B cell (primary cell): ENCODE measurements at regions of chr3 and their contacts with region 1.

Region 1: DNA sequence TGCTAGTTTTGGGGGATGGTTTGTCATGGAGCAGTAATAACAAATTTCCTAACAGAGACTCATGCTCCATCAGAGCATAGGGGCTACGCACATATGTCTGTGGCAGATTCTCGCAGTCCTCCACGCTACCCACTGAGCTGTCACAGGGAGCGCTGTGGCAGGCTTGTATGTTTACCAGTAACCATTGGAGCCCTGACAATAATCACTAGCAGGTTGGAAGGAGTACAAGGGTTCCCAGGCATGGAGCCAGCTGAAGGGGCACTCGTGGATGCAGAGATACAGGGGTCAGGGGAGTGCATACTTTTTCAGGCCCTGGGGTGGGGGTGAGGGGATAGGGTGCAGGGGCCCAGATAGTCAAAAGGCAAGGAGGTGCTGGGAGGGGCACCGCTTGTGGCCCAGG is 7.9 kb upstream of the GP9 start:
- DNase-seq: no peak
- ATAC-seq: no peak
- H3K4me3 ChIP-seq: no peak overlapping the region
- H3K4me3 Mint-ChIP-seq: no peak overlapping the region
- H3K27ac ChIP-seq: no peak overlapping the region
- H3K27ac Mint-ChIP-seq: no peak overlapping the region
- H3K4me1 ChIP-seq: peaks cover 4 to 7% of the 10 kb centered on the region in 2 donors
- H3K4me1 Mint-ChIP-seq: peaks cover 7% of the 10 kb centered on the region
- H3K27me3 ChIP-seq: peaks cover 0 to 10% (median 2%) of the 10 kb centered on the region in 4 experiments
- H3K27me3 Mint-ChIP-seq: peaks cover 31% of the 10 kb centered on the region
- CTCF ChIP-seq: no peak

Region 2: DNA sequence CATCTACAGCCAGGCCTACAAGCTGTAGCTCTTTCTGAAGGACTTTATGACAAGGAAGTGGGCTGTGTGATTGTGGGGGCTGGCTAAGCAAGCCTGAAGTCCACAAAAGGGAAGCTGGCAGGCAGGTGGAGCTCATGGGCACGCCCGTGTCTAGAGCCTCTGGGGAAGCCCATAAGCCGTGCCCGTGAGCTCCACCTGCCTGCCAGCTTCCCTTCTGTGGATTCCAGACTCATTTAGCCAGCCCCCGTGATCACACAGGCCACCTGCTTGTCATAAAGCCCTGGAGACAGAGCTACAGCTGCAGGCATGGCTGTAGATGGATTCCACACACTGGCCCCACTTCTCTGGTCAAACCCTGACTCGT is 36.3 kb before region 1 on chr3:
- CTCF ChIA-PET with region 1: interaction called, 27 read pairs
- POLR2A ChIA-PET with region 1: no interaction called
- intact Hi-C with region 1: no loop called
- DNase-seq: peak; percentile 92
- ATAC-seq: peak; percentile 86
- H3K4me3 ChIP-seq: peak overlapping the region in 3 of 5 experiments; percentile 5 to 28 (median 18)
- H3K4me3 Mint-ChIP-seq: peak overlapping the region; percentile 79
- H3K27ac ChIP-seq: peak overlapping the region; percentile 85 to 96
- H3K27ac Mint-ChIP-seq: peak overlapping the region; percentile 97
- H3K4me1 ChIP-seq: peaks cover 33 to 35% of the 10 kb centered on the region in 2 donors
- H3K4me1 Mint-ChIP-seq: peaks cover 41% of the 10 kb centered on the region
- H3K27me3 ChIP-seq: no peaks in the 10 kb centered on the region
- H3K27me3 Mint-ChIP-seq: no peaks in the 10 kb centered on the region
- CTCF ChIP-seq: peak; percentile 41

Region 3: GRCh38 chr3:129026728-129027543 is 25.7 kb before region 1 on chr3:
- CTCF ChIA-PET with region 1: interaction called, 19 read pairs
- POLR2A ChIA-PET with region 1: no interaction called
- intact Hi-C with region 1: loop called (anchors 2 kb)
- DNase-seq: peak; percentile 95
- ATAC-seq: peak; percentile 98
- H3K4me3 ChIP-seq: peak overlapping the region; percentile 30 to 71 (median 61)
- H3K4me3 Mint-ChIP-seq: peak overlapping the region; percentile 91
- H3K27ac ChIP-seq: peak overlapping the region; percentile 74 to 83
- H3K27ac Mint-ChIP-seq: peak overlapping the region; percentile 95
- H3K4me1 ChIP-seq: peaks cover 13 to 15% of the 10 kb centered on the region in 2 donors
- H3K4me1 Mint-ChIP-seq: peaks cover 22% of the 10 kb centered on the region
- H3K27me3 ChIP-seq: peaks cover 0 to 6% (median 0%) of the 10 kb centered on the region in 4 experiments
- H3K27me3 Mint-ChIP-seq: peaks cover 3% of the 10 kb centered on the region
- CTCF ChIP-seq: peak; percentile 91

Region 4: DNA sequence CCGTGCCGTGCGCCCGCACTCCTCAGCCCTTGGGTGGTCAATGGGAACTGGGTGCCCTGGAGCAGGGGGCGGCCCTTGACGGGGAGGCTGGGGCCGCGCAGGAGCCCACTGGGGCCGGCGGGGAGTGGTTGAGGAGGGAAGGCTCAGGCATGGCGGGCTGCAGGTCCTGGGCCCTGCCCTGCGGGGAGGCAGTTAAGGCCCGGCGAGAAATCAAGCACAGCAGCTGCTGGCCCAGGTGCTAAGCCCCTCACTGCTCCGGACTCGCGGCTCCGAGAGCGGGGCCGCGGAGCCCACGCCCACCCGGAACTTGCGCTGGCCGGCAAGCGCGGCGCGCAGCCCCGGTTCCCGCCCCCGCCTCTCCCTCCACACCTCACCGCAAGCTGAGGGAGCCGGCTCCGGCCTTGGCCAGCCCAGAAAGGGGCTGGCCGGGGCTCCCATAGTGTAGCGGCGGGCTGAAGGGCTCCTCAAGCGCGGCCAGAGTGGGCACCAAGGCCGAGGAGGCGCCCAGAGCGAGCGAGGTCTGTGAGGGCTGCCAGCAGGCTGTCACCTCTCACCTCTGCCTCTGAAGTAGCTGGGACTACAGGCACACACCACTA is 15.7 kb after region 1 on chr3:
- CTCF ChIA-PET with region 1: interaction called, 35 read pairs
- POLR2A ChIA-PET with region 1: interaction called, 3 read pairs
- intact Hi-C with region 1: no loop called
- DNase-seq: no peak
- ATAC-seq: peak; percentile 14
- H3K4me3 ChIP-seq: peak overlapping the region in 3 of 5 experiments; percentile 25 to 50 (median 28)
- H3K4me3 Mint-ChIP-seq: peak overlapping the region; percentile 71
- H3K27ac ChIP-seq: no peak overlapping the region
- H3K27ac Mint-ChIP-seq: no peak overlapping the region
- H3K4me1 ChIP-seq: peaks cover 4 to 12% of the 10 kb centered on the region in 2 donors
- H3K4me1 Mint-ChIP-seq: peaks cover 11% of the 10 kb centered on the region
- H3K27me3 ChIP-seq: peaks cover 0 to 32% (median 6%) of the 10 kb centered on the region in 4 experiments
- H3K27me3 Mint-ChIP-seq: peaks cover 38% of the 10 kb centered on the region
- CTCF ChIP-seq: no peak

Region 5: GRCh38 chr3:129120254-129121004 is 67.8 kb after region 1 on chr3:
- CTCF ChIA-PET with region 1: interaction called, 23 read pairs
- POLR2A ChIA-PET with region 1: no interaction called
- intact Hi-C with region 1: loop called (anchors 1 kb)
- DNase-seq: peak; percentile 93
- ATAC-seq: peak; percentile 61
- H3K4me3 ChIP-seq: peak overlapping the region; percentile 68 to 81 (median 76)
- H3K4me3 Mint-ChIP-seq: peak overlapping the region; percentile 88
- H3K27ac ChIP-seq: peak overlapping the region; percentile 61 to 62
- H3K27ac Mint-ChIP-seq: peak overlapping the region; percentile 84
- H3K4me1 ChIP-seq: peaks cover 42 to 46% of the 10 kb centered on the region in 2 donors
- H3K4me1 Mint-ChIP-seq: peaks cover 53% of the 10 kb centered on the region
- H3K27me3 ChIP-seq: no peaks in the 10 kb centered on the region
- H3K27me3 Mint-ChIP-seq: no peaks in the 10 kb centered on the region
- CTCF ChIP-seq: peak; percentile 30

Region 6: GRCh38 chr3:129316131-129317013 is 263.7 kb after region 1 on chr3:
- CTCF ChIA-PET with region 1: interaction called, 24 read pairs
- POLR2A ChIA-PET with region 1: no interaction called
- intact Hi-C with region 1: no loop called
- DNase-seq: peak; percentile 88
- ATAC-seq: peak; percentile 45
- H3K4me3 ChIP-seq: peak overlapping the region; percentile 30 to 84 (median 82)
- H3K4me3 Mint-ChIP-seq: peak overlapping the region; percentile 82
- H3K27ac ChIP-seq: peak overlapping the region in 1 of 2 donors; percentile 78
- H3K27ac Mint-ChIP-seq: peak overlapping the region; percentile 87
- H3K4me1 ChIP-seq: peaks cover 26 to 40% of the 10 kb centered on the region in 2 donors
- H3K4me1 Mint-ChIP-seq: peaks cover 27% of the 10 kb centered on the region
- H3K27me3 ChIP-seq: peaks cover 0 to 30% (median 15%) of the 10 kb centered on the region in 4 experiments
- H3K27me3 Mint-ChIP-seq: peaks cover 18% of the 10 kb centered on the region
- CTCF ChIP-seq: peak; percentile 71